IMR-90 (cell line): ENCODE measurements at regions of chr1 and their contacts with region 1.

Region 1: DNA sequence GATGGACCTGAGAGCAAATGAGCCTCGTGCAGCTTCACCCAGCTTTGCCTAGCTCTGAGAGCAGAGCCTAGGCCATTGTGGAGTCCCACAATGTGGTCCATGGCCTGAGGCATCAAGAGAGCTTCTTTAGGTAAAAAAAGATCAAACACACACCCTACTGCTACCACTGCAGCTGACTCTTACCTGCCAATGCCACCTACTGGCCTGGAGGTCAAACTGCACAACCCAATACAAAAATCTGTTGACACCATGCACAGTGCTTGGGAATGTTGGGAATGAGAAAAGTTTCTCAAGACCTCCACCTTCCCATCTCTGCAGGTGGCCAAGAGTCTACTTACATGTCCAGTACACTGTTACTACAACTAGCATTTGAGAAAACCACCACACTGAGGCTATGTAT is 60.6 kb downstream of the UCHL5 start:
- DNase-seq: no peak
- ATAC-seq: no peak
- H3K4me3 ChIP-seq: no peak overlapping the region
- H3K27ac ChIP-seq: no peak overlapping the region
- H3K4me1 ChIP-seq: no peaks in the 10 kb centered on the region
- H3K27me3 ChIP-seq: no peaks in the 10 kb centered on the region
- CTCF ChIP-seq: 0 out of 2 replicates have a peak, but pooled peaks have one; percentile 5
- POLR2A ChIP-seq: no peak
- RAD21 ChIP-seq: no peak

Region 2: DNA sequence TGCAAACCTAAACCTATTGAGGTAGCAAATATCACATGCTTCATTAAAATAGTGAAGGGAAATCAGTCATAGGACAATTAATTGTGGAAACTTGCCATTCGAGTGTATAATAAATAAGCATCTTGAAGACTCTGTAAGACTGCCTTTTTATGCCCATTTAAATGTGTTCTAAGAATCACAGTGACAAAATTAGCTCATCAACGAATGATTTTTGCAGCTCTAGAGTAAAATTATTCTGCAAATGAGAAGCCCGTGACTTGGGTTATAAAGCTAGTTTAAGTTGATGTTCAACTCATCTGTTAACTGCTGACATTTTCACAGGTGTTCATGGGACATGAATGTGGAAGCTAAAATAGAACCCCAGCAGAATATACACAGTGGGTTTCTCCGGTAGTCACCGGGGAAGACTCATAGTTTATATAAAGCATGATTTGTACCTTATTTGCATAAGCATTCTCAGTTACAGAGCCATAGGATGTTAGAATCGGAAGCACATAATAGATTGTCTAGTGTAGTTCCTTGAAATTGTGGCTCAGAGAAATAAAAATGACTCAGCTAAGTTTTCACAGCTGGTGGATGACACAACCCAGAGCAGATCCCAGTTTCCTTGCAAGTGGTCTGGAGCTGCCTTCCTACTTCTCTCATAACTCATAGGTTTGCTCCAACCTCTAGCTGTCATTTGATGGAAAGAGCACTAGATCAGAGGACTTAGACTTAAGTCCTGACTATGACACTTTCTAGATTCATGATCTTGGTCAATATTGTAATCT is 46.7 kb before region 1 on chr1:
- CTCF ChIA-PET with region 1: no interaction called
- POLR2A ChIA-PET with region 1: no interaction called
- dilution Hi-C with region 1: no loop called
- in situ Hi-C with region 1: no loop called
- intact Hi-C with region 1: loop called (anchors 5 kb)
- DNase-seq: peak; percentile 97
- ATAC-seq: peak; percentile 97
- H3K4me3 ChIP-seq: no peak overlapping the region
- H3K27ac ChIP-seq: no peak overlapping the region
- H3K4me1 ChIP-seq: peaks cover 3% of the 10 kb centered on the region; the same call in 1 of the 2 replicates
- H3K27me3 ChIP-seq: no peaks in the 10 kb centered on the region
- CTCF ChIP-seq: no peak
- POLR2A ChIP-seq: no peak
- RAD21 ChIP-seq: no peak

Region 3: GRCh38 chr1:193377472-193377871 is 378.9 kb after region 1 on chr1:
- CTCF ChIA-PET with region 1: no interaction called
- POLR2A ChIA-PET with region 1: no interaction called
- dilution Hi-C with region 1: no loop called
- in situ Hi-C with region 1: no loop called
- intact Hi-C with region 1: no loop called
- DNase-seq: no peak
- ATAC-seq: no peak
- H3K4me3 ChIP-seq: no peak overlapping the region
- H3K27ac ChIP-seq: no peak overlapping the region
- H3K4me1 ChIP-seq: no peaks in the 10 kb centered on the region
- H3K27me3 ChIP-seq: no peaks in the 10 kb centered on the region
- CTCF ChIP-seq: no peak
- POLR2A ChIP-seq: no peak
- RAD21 ChIP-seq: no peak